Activated CD4-positive, alpha-beta memory T cell treated with anti-CD3 and anti-CD28 coated beads, Interleukin-2, amount 10 ng/mL, durations not matched to agents 7 days and 5 days (primary cell): ENCODE measurements at regions of chr9 and their contacts with region 1.

Region 1: DNA sequence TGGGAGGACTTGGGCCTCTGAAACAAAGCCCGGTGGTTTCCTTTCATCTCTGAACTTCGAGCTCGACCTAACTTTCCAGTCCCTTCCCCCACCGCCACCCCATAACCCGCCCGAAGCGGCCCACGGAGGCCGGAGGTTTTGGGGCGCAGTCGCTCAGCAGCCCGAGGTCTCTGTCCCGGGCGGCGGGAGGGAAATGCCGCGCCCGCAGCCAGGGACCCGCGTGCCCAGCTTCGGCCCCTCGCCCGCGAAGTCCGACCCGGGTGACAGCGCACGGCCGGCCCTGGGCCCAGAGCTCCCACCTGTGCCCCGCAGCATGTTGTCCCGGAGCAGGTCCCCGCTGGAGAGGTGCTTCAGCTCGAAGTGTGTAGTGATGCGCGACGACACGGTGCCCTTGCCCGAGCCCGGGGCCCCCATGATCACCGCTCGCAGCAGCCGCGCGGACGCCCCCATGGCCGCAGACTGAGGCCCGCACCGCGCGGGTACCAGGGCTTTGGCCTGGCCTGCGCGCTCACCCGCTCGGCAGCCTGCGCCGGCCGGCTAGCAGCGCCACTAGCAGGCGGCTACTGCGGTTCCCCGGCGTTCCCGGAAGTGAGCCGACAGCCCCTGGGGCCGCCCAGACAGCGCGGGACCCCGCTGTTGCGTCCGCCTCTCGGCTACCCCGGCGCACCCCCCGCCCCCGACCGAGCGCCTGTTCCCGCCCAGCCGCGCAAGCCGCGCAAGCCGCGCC is at the start of gene AK3:
- DNase-seq: peak; percentile 88
- H3K4me3 Mint-ChIP-seq: peak within 1 kb of the TSS; percentile 92
- H3K27ac Mint-ChIP-seq: peak within 1 kb of the TSS; percentile 85
- H3K4me1 Mint-ChIP-seq: peaks cover 39% of the 10 kb centered on the region
- H3K27me3 Mint-ChIP-seq: no peaks in the 10 kb centered on the region
- total RNA-seq, gene AK3: 34.0 to 34.6 TPM

Region 2: GRCh38 chr9:4662108-4662988 is 78.5 kb before region 1 on chr9 and contains the start of gene PLPP6:
- CTCF ChIA-PET with region 1: interaction called, 9 read pairs
- POLR2A ChIA-PET with region 1: interaction called, 16 read pairs
- DNase-seq: peak; percentile 78
- H3K4me3 Mint-ChIP-seq: peak within 1 kb of the TSS; percentile 98
- H3K27ac Mint-ChIP-seq: peak within 1 kb of the TSS; percentile 80
- H3K4me1 Mint-ChIP-seq: peaks cover 57% of the 10 kb centered on the region
- H3K27me3 Mint-ChIP-seq: peaks cover 6% of the 10 kb centered on the region
- total RNA-seq, gene PLPP6: 9.6 to 10.3 TPM

Region 3: DNA sequence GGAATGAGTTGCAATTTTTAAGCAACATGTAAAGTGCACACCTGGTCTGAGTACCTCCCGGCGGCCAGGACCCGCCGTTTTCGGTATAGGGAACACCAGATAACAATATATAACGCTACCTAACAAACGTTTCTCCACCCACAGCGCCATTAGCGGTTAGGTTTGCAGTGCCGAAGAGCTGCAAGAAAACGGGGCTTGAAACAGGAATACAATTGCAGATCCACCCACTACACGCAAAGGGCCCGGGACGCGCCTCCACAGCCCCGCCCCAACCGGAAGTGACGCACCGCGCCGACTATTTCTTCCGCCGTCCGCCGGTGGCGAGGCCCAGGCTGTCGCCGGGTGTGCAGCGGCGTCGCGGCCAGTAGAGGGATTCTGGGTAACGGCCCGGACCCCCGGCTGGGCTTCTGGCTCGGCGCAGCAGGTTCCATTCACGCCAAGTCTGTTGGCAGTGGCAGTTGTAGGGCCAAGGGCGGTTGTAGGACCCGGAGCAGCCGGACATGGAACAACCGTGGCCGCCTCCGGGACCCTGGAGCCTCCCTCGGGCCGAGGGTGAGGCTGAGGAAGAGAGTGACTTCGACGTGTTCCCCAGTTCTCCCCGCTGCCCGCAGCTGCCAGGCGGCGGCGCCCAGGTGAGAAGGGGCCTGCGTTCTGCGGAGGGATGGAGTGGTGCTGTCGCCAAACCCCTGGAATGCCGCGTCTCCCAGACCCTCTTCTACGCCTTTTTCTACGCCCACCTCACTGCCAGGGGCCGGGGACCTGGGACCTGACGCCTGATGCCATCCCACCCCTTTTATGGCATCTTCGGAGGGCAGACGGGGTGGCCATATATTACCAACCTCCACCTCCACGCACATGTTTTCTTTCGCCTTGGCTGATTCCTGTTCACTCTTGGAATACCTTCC is 61.3 kb before region 1 on chr9 and contains the start of gene CDC37L1:
- CTCF ChIA-PET with region 1: interaction called, 4 read pairs
- POLR2A ChIA-PET with region 1: interaction called, 28 read pairs
- DNase-seq: peak; percentile 99
- H3K4me3 Mint-ChIP-seq: no peak within 1 kb of the TSS
- H3K27ac Mint-ChIP-seq: no peak within 1 kb of the TSS
- H3K4me1 Mint-ChIP-seq: peaks cover 3% of the 10 kb centered on the region
- H3K27me3 Mint-ChIP-seq: no peaks in the 10 kb centered on the region
- total RNA-seq, gene CDC37L1: 11.9 to 12.0 TPM